ENCODE measurements at regions of chr2 and their contacts with region 1.

Region 1: DNA sequence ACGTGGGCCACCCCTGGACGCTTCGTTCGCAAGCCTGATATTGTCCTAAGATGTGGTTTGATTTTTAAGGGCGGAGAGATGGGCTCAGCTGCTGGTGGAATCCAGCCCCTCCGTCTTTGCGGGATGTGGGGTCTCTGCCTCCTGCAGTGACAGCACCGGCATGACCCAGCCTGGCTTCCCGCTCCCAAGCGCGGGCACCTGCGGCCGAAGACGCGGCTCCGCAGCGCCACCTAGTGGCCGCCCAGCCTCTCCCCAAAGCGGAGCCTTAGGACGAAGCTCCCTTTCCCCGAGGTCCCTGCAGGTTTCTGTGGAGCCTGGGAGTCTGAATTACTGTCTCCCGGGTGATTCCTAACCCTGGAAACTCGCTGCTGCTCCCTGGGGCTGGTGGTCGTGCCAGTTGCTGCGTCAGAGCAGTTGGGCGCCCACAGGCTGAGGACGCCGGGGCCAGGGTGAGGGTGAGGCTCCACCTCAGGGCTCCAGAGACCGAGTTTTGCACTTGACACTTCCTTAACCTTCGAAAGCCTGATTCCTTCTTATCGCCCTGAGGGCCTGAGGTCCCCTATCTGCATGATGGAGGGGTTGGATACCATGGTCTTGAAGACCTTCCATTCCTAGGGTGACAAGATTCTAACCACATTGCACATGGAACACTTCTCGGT is 137.5 kb downstream of the TPO start:
- DNase-seq: no peak
- H3K4me3 ChIP-seq: no peak overlapping the region
- CTCF ChIP-seq: peak; percentile 95

Region 2: GRCh38 chr2:677056-677965 is 873.5 kb before region 1 on chr2 and contains the start of gene TMEM18:
- in situ Hi-C with region 1: loop called (anchors 25 kb)
- DNase-seq: peak; percentile 99
- H3K4me3 ChIP-seq: peak within 1 kb of the TSS; percentile 70
- CTCF ChIP-seq: peak; percentile 33

Region 3: DNA sequence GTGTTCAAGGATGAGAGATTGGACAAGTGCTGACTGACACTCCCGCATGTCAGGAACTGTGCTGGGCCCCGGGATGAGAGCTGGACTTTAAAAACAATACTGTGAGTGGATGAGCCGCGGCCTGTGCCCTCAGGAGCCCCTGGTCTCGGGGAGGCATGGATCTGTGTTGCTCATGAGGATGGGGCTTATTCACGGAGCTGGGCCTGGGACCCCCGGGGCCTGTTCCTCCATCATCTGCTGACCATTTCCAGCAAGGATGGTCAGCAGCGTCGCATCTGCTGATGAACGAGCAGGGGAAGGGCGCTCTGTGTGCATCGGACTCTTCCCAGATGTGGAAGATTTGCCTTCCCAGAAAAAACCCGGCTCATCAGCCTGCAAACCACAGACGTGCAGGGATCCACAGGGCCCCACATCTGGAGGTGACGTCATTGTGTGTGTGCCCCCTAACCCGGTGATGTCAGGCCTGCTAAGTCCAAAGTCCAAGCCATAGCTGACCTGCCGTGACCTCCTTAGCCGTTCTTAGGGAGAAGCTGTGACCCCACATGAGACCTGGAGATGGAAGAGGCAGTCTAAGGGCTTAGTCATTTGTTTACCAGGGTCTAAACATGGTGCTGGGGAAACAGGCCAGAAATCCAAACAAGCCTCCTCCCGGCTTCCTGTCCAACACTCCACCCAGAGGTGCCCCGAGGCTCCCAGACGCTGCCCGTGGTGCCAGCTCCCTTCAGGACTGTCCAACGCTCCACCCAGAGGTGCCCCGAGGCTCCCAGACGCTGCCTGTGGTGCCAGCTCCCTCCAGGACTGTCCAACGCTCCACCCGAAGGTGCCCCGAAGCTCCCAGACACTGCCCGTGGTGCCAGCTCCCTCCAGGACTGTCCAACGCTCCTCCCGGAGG is 49.6 kb after region 1 on chr2:
- in situ Hi-C with region 1: no loop called
- DNase-seq: no peak
- H3K4me3 ChIP-seq: no peak overlapping the region
- CTCF ChIP-seq: no peak